WTC11 (cell line): ENCODE measurements at regions of chr3 and their contacts with region 1.

Region 1: DNA sequence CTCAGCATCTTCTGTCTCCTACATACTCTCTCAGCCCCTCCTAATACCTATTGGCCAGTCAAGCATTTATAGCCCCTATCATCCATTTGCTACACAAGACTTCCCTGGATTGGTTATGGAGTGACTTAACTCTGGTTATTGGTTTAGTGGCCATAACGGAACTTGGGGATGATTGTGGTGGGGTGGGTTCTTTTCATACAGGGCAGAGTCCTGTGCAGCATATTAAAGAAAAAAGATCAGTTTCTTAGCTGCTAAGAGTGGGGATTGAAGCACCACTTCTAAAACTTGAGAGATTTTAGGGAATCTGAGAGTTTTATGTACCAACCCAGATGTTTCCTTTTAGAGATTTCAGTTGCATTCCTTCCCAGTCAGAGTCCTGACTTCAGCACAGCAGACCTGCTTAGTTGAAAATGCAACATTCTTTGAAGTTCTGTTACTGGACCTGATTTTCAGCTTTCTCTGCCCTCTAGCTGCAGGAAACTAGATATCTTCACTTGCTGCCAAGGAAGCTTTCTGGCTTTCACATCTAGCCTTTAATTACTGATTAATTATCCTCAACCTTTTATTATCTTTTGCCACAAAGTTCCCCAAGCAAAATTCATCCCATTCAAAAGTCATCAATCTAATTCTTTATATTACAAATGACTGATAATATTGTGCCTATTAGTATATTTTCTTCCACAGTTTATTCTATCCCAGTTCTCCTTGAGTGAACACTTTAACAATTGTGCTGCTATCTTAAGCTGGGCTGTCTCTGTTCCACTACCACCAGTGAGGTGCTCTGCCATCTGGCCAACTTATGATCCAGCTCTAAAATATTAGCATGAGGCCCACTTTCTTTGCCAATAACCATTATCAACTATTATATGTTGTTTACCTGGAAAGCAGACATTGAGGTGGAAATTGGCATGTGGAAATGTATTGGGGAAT is 906.0 kb upstream of the ALCAM start:
- DNase-seq: no peak
- ATAC-seq: peak; percentile 96
- H3K4me3 Mint-ChIP-seq: no peak overlapping the region
- H3K27ac Mint-ChIP-seq: peak overlapping the region; percentile 67
- H3K4me1 Mint-ChIP-seq: peaks cover 14% of the 10 kb centered on the region
- H3K27me3 Mint-ChIP-seq: no peaks in the 10 kb centered on the region
- CTCF ChIP-seq: no peak

Region 2: DNA sequence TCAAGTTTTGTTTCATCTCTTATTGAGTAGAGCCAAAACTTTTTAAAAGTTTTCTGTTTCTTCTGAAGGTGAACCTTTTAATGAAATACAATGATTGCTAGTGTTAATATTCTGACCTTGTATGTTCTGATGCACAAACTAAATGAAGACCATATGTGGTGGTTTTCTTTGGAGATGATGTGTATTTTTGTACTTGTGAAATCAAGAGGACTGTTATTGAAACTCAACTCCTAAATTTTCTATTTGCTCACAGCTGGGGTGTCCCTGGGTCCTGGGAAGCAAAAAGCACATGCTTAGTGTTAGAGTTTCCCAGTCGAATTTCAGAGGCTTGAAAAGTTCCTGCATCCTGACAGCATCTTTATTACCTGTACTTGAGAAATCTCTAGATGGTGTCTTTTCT is 279.8 kb before region 1 on chr3:
- CTCF ChIA-PET with region 1: no interaction called
- POLR2A ChIA-PET with region 1: no interaction called
- DNase-seq: no peak
- ATAC-seq: no peak
- H3K4me3 Mint-ChIP-seq: no peak overlapping the region
- H3K27ac Mint-ChIP-seq: no peak overlapping the region
- H3K4me1 Mint-ChIP-seq: peaks cover 6% of the 10 kb centered on the region
- H3K27me3 Mint-ChIP-seq: no peaks in the 10 kb centered on the region
- CTCF ChIP-seq: no peak

Region 3: GRCh38 chr3:104447681-104448080 is 13.1 kb before region 1 on chr3:
- CTCF ChIA-PET with region 1: interaction called, 11 read pairs
- POLR2A ChIA-PET with region 1: no interaction called
- DNase-seq: no peak
- ATAC-seq: no peak
- H3K4me3 Mint-ChIP-seq: no peak overlapping the region
- H3K27ac Mint-ChIP-seq: no peak overlapping the region
- H3K4me1 Mint-ChIP-seq: peaks cover 4% of the 10 kb centered on the region
- H3K27me3 Mint-ChIP-seq: peaks cover 5% of the 10 kb centered on the region; the same call in 1 of the 2 replicates
- CTCF ChIP-seq: no peak

Region 4: GRCh38 chr3:104556372-104557078 is 95.8 kb after region 1 on chr3:
- CTCF ChIA-PET with region 1: no interaction called
- POLR2A ChIA-PET with region 1: no interaction called
- DNase-seq: no peak
- ATAC-seq: peak; percentile 74
- H3K4me3 Mint-ChIP-seq: no peak overlapping the region
- H3K27ac Mint-ChIP-seq: no peak overlapping the region
- H3K4me1 Mint-ChIP-seq: peaks cover 18% of the 10 kb centered on the region
- H3K27me3 Mint-ChIP-seq: no peaks in the 10 kb centered on the region
- CTCF ChIP-seq: no peak